ENCODE measurements at regions of chr1 and their contacts with region 1.

Region 1: DNA sequence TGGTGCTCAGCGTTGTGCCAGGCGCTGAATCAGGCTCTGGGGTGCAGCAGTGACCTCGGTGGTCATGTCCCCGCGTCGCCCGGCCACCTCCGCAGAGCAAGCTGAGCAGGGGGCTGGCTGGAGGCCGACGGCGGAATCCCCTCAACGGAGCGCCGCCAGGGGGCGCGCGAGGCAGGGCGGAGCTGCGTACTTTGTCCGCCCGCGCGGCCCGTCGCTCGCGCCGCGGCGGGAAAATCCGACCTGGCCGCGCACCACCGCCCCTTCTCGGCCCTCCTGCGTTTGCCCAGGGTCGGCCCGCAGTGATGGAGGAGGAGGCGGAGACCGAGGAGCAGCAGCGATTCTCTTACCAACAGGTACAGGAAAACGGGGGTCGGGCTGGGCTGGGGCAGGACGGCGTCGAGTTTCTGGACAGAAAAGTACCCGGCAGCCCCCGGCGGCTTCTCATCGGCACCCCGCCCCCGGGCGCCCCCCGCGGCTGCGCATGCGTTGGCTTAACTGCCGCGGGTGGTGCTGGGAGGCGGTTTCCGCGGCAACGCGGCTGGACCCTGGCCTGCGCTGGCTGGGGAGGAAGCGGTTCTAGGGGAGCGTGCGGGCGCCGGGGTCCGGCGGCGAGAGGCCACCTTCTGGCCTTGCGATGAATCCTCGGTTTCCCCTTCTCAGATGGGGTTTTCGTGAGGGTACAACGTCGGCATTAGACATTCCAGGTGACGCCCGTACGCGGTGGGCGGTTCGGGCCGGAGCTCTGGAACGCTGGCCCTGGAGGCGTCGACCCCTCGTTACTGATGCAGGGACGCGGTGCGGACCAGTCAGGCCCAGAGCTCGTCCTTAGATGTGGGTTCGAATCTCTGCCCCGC is at the start of gene CENPS:
- DNase-seq: peak; percentile 88 to 95
- H3K4me3 ChIP-seq: peak within 1 kb of the TSS; percentile 60
- H3K4me3 Mint-ChIP-seq: peak within 1 kb of the TSS; percentile 96
- H3K27ac Mint-ChIP-seq: peak within 1 kb of the TSS; percentile 87
- H3K4me1 ChIP-seq: peaks cover 23% of the 10 kb centered on the region
- H3K4me1 Mint-ChIP-seq: peaks cover 11% of the 10 kb centered on the region
- H3K27me3 ChIP-seq: no peaks in the 10 kb centered on the region
- H3K27me3 Mint-ChIP-seq: no peaks in the 10 kb centered on the region
- CTCF ChIP-seq: peak; percentile 72 to 90
- total RNA-seq, gene CENPS: 20.1 and 23.1 TPM in 2 replicates

Region 2: GRCh38 chr1:9957726-9958125 is 472.7 kb before region 1 on chr1:
- CTCF ChIA-PET with region 1: no interaction called
- POLR2A ChIA-PET with region 1: no interaction called
- intact Hi-C with region 1: loop called (anchors 5 kb)
- DNase-seq: no peak
- H3K4me3 ChIP-seq: no peak overlapping the region
- H3K4me3 Mint-ChIP-seq: no peak overlapping the region
- H3K27ac Mint-ChIP-seq: no peak overlapping the region
- H3K4me1 ChIP-seq: 0 out of 2 replicates have a peak, but pooled peaks cover 9% of the 10 kb centered on the region
- H3K4me1 Mint-ChIP-seq: no peaks in the 10 kb centered on the region
- H3K27me3 ChIP-seq: no peaks in the 10 kb centered on the region
- H3K27me3 Mint-ChIP-seq: no peaks in the 10 kb centered on the region
- CTCF ChIP-seq: no peak

Region 3: DNA sequence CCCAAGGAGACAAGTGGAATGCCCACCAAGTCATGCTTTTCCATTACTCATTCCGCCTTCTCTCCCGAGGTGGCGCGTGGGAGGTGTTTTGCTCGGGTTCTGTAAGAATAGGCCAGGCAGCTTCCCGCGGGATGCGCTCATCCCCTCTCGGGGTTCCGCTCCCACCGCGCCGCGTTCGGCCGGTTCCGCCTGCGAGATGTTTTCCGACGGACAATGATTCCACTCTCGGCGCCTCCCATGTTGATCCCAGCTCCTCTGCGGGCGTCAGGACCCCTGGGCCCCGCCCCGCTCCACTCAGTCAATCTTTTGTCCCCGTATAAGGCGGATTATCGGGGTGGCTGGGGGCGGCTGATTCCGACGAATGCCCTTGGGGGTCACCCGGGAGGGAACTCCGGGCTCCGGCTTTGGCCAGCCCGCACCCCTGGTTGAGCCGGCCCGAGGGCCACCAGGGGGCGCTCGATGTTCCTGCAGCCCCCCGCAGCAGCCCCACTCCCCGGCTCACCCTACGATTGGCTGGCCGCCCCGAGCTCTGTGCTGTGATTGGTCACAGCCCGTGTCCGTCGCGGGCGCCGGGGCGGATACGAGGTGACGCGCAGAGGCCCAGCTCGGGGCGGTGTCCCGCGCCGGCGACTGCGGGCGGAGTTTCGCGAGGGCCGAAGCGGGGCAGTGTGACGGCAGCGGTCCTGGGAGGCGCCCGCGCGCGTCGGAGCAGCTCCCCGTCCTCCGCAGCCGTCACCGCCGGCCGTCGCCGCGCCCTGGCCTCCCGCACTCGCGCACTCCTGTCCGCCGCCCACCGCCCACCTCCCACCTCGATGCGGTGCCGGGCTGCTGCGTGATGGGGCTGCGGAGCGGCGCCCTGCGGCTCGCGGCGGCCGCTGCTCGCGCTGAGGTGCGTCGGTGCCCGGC is 220.3 kb before region 1 on chr1 and contains the start of gene KIF1B:
- CTCF ChIA-PET with region 1: no interaction called
- POLR2A ChIA-PET with region 1: no interaction called
- intact Hi-C with region 1: loop called (anchors 1 kb)
- DNase-seq: peak; percentile 96 to 99
- H3K4me3 ChIP-seq: peak within 1 kb of the TSS; percentile 76
- H3K4me3 Mint-ChIP-seq: peak within 1 kb of the TSS; percentile 95
- H3K27ac Mint-ChIP-seq: peak within 1 kb of the TSS; percentile 88
- H3K4me1 ChIP-seq: peaks cover 8% of the 10 kb centered on the region; the same call in 1 of the 2 replicates
- H3K4me1 Mint-ChIP-seq: peaks cover 18% of the 10 kb centered on the region
- H3K27me3 ChIP-seq: no peaks in the 10 kb centered on the region
- H3K27me3 Mint-ChIP-seq: no peaks in the 10 kb centered on the region
- CTCF ChIP-seq: peak; percentile 94 to 95
- total RNA-seq, gene KIF1B: 41.1 and 43.6 TPM in 2 replicates

Region 4: DNA sequence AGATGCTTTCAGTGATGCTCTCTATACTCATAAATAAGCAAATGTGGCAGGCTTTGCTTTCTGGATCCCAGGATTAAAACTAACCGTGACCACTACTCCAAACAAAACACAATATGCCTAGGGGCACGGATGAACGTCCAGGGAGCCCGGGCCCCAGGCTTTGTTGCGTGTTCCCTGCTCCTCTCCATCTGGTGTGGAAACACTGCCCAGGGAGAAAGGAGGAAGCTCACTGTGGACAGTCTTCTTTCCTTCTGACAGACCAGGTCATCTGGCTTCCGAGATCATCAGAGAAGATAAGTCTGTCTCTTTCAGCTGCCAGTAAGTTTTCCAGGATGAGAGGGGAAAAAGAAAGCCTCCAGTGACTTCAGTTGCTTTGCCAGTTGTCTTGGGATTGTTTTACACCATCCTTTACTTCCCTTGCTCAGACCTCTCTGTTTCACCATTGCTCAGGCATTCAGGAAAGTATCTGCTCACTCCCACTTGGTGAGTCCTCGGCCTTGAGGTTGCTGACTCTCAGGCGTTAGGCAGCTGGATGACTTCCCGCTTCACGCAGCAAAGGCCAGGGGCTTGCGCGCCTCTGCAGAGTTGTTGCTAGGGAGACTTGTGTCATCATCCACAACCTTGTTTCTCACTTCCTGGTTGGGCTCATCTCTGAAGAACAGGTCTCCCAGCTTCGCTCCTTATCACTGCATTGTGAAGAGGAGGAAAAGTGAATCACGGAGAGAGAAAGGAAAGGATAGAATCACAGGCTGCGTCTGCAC is 52.2 kb before region 1 on chr1:
- CTCF ChIA-PET with region 1: interaction called, 11 read pairs
- POLR2A ChIA-PET with region 1: no interaction called
- intact Hi-C with region 1: loop called (anchors 1 kb)
- DNase-seq: peak in 1 of 2 experiments; percentile 30
- H3K4me3 ChIP-seq: no peak overlapping the region
- H3K4me3 Mint-ChIP-seq: no peak overlapping the region
- H3K27ac Mint-ChIP-seq: no peak overlapping the region
- H3K4me1 ChIP-seq: no peaks in the 10 kb centered on the region
- H3K4me1 Mint-ChIP-seq: no peaks in the 10 kb centered on the region
- H3K27me3 ChIP-seq: no peaks in the 10 kb centered on the region
- H3K27me3 Mint-ChIP-seq: no peaks in the 10 kb centered on the region
- CTCF ChIP-seq: no peak

Region 5: GRCh38 chr1:10398734-10399623 is 31.5 kb before region 1 on chr1 and contains the start of gene PGD:
- CTCF ChIA-PET with region 1: interaction called, 4 read pairs
- POLR2A ChIA-PET with region 1: interaction called, 8 read pairs
- intact Hi-C with region 1: loop called (anchors 1 kb)
- DNase-seq: peak; percentile 98 to 99
- H3K4me3 ChIP-seq: peak within 1 kb of the TSS; percentile 77
- H3K4me3 Mint-ChIP-seq: peak within 1 kb of the TSS; percentile 93
- H3K27ac Mint-ChIP-seq: peak within 1 kb of the TSS; percentile 84
- H3K4me1 ChIP-seq: peaks cover 14% of the 10 kb centered on the region; the same call in 1 of the 2 replicates
- H3K4me1 Mint-ChIP-seq: peaks cover 5% of the 10 kb centered on the region
- H3K27me3 ChIP-seq: no peaks in the 10 kb centered on the region
- H3K27me3 Mint-ChIP-seq: no peaks in the 10 kb centered on the region
- CTCF ChIP-seq: no peak
- total RNA-seq, gene PGD: 187 and 215 TPM in 2 replicates

Region 6: DNA sequence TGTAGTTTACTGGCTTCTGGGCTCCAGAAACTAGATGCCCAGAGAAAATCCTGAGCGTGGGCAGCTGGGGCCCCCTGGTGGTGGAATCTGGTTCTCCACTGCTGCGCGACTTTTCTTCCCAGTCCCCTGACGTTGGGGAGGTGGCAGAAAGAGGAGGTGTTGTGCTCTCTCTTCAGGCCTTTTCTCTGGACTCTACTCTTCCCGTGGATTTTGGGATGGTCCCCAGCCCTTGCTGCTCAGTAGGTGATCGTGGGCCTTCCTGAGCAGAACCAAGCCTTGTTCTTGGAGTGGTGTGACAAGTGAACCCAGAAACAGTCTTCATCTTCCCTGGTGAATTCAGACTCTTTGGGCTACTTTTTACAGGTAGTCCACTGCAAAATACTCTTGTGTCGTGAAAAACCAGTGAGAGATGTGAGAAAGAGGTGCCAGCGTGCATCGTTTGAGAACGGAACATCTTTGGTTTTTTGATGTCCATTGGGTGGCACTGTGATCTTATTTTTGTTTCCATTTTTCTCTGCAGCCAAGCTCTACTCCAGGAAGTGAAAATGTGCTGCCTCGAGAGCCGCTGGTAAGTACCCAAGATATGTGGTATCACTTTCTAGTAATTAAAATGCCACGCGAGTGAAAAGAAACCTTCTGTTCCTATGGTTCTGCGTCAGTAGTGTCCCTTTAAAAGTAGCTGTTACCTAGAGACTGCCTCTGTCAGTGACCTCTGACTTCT is 64.5 kb after region 1 on chr1:
- CTCF ChIA-PET with region 1: interaction called, 23 read pairs
- POLR2A ChIA-PET with region 1: no interaction called
- intact Hi-C with region 1: loop called (anchors 1 kb)
- DNase-seq: peak; percentile 64 to 84
- H3K4me3 ChIP-seq: no peak overlapping the region
- H3K4me3 Mint-ChIP-seq: peak overlapping the region; percentile 17
- H3K27ac Mint-ChIP-seq: peak overlapping the region; percentile 45
- H3K4me1 ChIP-seq: peaks cover 10% of the 10 kb centered on the region
- H3K4me1 Mint-ChIP-seq: peaks cover under 1% of the 10 kb centered on the region
- H3K27me3 ChIP-seq: no peaks in the 10 kb centered on the region
- H3K27me3 Mint-ChIP-seq: no peaks in the 10 kb centered on the region
- CTCF ChIP-seq: peak; percentile 88

Region 7: GRCh38 chr1:11285883-11286734 is 855.7 kb after region 1 on chr1:
- CTCF ChIA-PET with region 1: no interaction called
- POLR2A ChIA-PET with region 1: no interaction called
- intact Hi-C with region 1: no loop called
- DNase-seq: no peak
- H3K4me3 ChIP-seq: no peak overlapping the region
- H3K4me3 Mint-ChIP-seq: no peak overlapping the region
- H3K27ac Mint-ChIP-seq: no peak overlapping the region
- H3K4me1 ChIP-seq: no peaks in the 10 kb centered on the region
- H3K4me1 Mint-ChIP-seq: peaks cover 6% of the 10 kb centered on the region
- H3K27me3 ChIP-seq: no peaks in the 10 kb centered on the region
- H3K27me3 Mint-ChIP-seq: no peaks in the 10 kb centered on the region
- CTCF ChIP-seq: peak in 1 of 2 experiments; percentile 14

Measured in Caco-2 (cell line).